PC-3 (cell line): ENCODE measurements at regions of chr12 and their contacts with region 1.

Region 1: DNA sequence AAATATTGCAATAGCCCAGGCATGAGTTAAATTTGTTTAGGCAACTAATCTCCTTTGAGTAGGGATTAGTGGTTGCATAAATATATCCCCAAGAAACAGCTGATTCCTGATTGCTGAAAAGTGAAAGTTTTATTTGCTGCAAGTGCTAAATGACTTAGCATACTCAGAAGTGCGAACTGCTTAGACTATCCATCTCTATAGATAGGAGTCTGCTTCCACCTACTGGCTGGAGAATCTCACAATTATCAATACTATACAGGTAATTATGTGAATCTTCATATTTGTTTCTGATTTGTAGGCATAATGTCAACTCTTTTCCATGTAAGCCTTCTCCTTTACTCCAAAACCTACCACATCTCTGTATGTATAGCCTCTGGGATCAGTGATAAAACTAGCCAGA is 11.9 kb upstream of the SLCO1B3 start:
- DNase-seq: peak; percentile 15
- ATAC-seq: 0 out of 2 replicates have a peak, but pooled peaks have one; percentile 24
- H3K4me3 ChIP-seq: no peak overlapping the region
- H3K27ac ChIP-seq: no peak overlapping the region
- H3K4me1 ChIP-seq: no peaks in the 10 kb centered on the region
- H3K27me3 ChIP-seq: no peaks in the 10 kb centered on the region
- CTCF ChIP-seq: no peak; the same call in 1 of the 2 replicates

Region 2: DNA sequence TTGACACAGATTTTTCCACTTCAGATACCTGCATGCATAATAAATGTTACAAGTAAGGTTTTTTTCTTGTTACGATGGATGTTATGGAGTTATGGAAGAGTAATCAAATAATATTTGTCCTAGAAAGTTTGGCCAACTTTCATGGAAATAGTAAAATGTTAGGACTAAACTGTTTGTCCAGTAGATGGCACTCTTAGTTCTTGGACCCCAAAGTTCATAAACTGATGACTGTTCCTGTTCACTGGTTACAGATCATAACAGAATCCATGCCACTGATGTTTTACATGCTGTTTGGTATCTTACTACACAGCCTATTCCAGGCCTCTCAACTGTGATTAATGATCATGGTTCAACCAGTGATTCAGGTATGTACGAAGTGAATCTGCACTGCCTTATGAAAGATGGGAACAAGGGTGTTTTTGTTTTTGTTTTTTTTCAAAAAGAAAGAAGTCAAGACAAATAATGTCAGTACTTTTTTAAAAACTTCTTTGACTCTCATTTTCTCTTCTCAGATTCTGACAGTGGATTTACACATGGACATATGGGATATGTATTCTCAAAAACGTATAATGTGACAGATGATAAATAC is 152.2 kb before region 1 on chr12:
- CTCF ChIA-PET with region 1: no interaction called
- POLR2A ChIA-PET with region 1: no interaction called
- intact Hi-C with region 1: loop called (anchors 1 kb)
- DNase-seq: peak; percentile 54
- ATAC-seq: peak; percentile 64
- H3K4me3 ChIP-seq: no peak overlapping the region
- H3K27ac ChIP-seq: no peak overlapping the region
- H3K4me1 ChIP-seq: no peaks in the 10 kb centered on the region
- H3K27me3 ChIP-seq: no peaks in the 10 kb centered on the region
- CTCF ChIP-seq: peak; percentile 70